ENCODE measurements at regions of chr6 and their contacts with region 1.

Region 1: GRCh38 chr6:53171605-53172446 is 23.2 kb upstream of the GCM1 start:
- DNase-seq: peak; percentile 76
- ATAC-seq: peak; percentile 93
- H3K4me3 ChIP-seq: no peak overlapping the region
- H3K27ac ChIP-seq: no peak overlapping the region
- H3K4me1 ChIP-seq: no peaks in the 10 kb centered on the region
- H3K27me3 ChIP-seq: no peaks in the 10 kb centered on the region
- CTCF ChIP-seq: peak; percentile 100
- EP300 ChIP-seq: no peak
- POLR2A ChIP-seq: no peak
- RAD21 ChIP-seq: peak; percentile 100

Region 2: GRCh38 chr6:53103992-53104675 is 67.7 kb before region 1 on chr6:
- CTCF ChIA-PET with region 1: interaction called, 28 read pairs
- POLR2A ChIA-PET with region 1: no interaction called
- in situ Hi-C with region 1: loop called (anchors 5 kb)
- intact Hi-C with region 1: loop called (anchors 1 kb)
- DNase-seq: peak; percentile 74
- ATAC-seq: peak; percentile 83
- H3K4me3 ChIP-seq: no peak overlapping the region
- H3K27ac ChIP-seq: no peak overlapping the region
- H3K4me1 ChIP-seq: peaks cover 10% of the 10 kb centered on the region; the same call in 1 of the 2 replicates
- H3K27me3 ChIP-seq: no peaks in the 10 kb centered on the region
- CTCF ChIP-seq: peak; percentile 71
- EP300 ChIP-seq: no peak
- POLR2A ChIP-seq: no peak
- RAD21 ChIP-seq: peak; percentile 36; the same call in 1 of the 2 replicates

Region 3: GRCh38 chr6:53128842-53129241 is 43.0 kb before region 1 on chr6:
- CTCF ChIA-PET with region 1: no interaction called
- POLR2A ChIA-PET with region 1: no interaction called
- in situ Hi-C with region 1: no loop called
- intact Hi-C with region 1: no loop called
- DNase-seq: no peak
- ATAC-seq: no peak
- H3K4me3 ChIP-seq: no peak overlapping the region
- H3K27ac ChIP-seq: no peak overlapping the region
- H3K4me1 ChIP-seq: peaks cover 32% of the 10 kb centered on the region
- H3K27me3 ChIP-seq: no peaks in the 10 kb centered on the region
- CTCF ChIP-seq: no peak
- EP300 ChIP-seq: no peak
- POLR2A ChIP-seq: no peak
- RAD21 ChIP-seq: no peak

Region 4: DNA sequence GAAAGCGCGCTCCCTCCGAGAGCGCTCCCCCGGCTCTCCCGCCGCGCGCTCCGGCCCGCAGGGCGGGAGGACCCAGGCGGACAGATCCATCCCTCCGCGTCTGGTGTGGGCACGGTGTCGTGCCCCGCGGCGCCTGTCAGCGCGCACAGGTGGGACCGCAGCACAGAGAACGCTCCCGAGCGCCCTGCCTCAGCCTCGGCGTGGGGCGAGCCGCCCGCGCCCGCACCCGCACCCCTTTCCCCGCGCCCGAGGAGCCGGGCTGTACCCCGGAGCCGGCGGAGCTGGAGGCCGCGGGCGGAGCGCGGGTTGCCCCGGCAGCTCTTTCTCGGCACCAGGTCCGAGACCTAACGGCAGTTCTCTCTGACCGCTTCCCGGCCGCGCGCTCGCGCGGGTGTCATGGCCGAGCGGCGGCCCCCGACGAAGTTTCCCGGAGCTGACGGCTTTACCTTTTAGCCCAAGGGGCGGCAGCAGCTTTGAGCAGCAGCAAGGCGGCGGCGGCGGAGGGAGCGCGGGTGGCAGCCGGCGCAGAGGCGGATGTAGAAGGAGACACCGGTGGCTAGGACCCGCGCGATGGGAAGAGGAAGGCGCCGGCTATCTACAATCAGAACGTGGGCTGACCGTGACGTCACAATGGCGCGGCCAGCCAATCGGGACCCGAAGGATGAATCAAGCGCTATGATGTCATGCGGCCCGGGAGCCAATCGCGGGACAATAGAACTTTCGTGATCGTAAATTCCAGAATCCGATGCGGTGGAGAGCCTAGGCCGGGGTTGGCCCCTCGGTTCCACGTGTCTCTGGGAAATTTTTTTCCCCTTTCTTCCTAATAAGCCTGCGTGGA is 176.8 kb after region 1 on chr6 and contains the start of gene ELOVL5:
- CTCF ChIA-PET with region 1: no interaction called
- POLR2A ChIA-PET with region 1: no interaction called
- in situ Hi-C with region 1: no loop called
- intact Hi-C with region 1: loop called (anchors 5 kb)
- DNase-seq: peak; percentile 81
- ATAC-seq: peak; percentile 84
- H3K4me3 ChIP-seq: peak within 1 kb of the TSS; percentile 69 to 91 (median 91)
- H3K27ac ChIP-seq: peak within 1 kb of the TSS; percentile 66
- H3K4me1 ChIP-seq: peaks cover 23% of the 10 kb centered on the region
- H3K27me3 ChIP-seq: peaks cover 0 to 29% of the 10 kb centered on the region in 2 experiments; a peak in 4 of 5 replicates
- CTCF ChIP-seq: no peak; the same call in 1 of the 2 replicates
- EP300 ChIP-seq: no peak
- POLR2A ChIP-seq: peak; percentile 7 to 60; a peak in 1 of 4 replicates
- RAD21 ChIP-seq: no peak; the same call in none of the 2 replicates
- total RNA-seq, gene ELOVL5: 43.9 and 72.4 TPM in 2 replicates

Region 5: DNA sequence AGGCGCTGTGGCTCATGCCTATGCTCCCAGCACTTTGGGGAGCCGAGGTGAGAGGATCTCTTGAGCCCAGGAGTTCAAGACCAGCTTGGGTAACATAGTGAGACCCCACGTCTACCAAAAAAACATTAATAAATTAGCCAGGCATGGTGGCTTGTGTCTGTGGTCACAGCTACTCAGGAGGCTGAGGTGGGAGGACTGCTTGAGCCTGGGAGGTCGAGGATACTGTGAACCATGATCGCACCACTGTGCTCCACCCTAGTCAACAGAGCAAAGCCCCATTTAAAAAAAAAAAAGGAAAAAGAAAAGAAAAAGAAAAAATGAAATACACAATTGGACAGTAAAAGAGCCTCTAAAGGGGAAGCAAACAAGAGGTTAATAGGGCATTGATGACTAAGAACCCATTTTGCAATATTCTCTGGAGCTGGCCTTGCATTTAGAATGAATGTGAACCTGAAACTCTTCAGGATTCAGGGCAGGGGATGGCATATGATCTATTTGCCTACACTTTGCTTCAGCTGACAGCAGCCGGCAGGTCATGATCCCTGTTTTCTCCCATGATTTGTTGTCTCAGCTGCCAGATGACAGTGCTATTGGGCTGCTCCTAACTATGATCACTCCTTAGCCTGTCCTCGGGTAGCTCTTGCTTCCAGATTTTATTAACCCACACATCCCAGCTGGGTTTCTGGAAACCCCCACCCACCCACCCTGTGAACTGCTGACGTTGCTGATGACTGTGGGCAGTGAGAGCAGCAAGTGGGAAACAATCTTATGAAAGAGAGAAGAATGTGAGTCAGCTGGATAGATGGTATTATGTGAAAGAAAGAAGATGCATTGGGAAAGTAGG is 260.7 kb after region 1 on chr6:
- CTCF ChIA-PET with region 1: interaction called, 152 read pairs
- POLR2A ChIA-PET with region 1: interaction called, 3 read pairs
- in situ Hi-C with region 1: loop called (anchors 5 kb)
- intact Hi-C with region 1: loop called (anchors 1 kb)
- DNase-seq: peak; percentile 93
- ATAC-seq: peak; percentile 93
- H3K4me3 ChIP-seq: no peak overlapping the region
- H3K27ac ChIP-seq: no peak overlapping the region
- H3K4me1 ChIP-seq: peaks cover 42% of the 10 kb centered on the region
- H3K27me3 ChIP-seq: no peaks in the 10 kb centered on the region; a peak in 1 of 5 replicates
- CTCF ChIP-seq: no peak
- EP300 ChIP-seq: peak in 1 of 2 experiments; percentile 72; a peak in 2 of 4 replicates
- POLR2A ChIP-seq: no peak
- RAD21 ChIP-seq: no peak

Region 6: DNA sequence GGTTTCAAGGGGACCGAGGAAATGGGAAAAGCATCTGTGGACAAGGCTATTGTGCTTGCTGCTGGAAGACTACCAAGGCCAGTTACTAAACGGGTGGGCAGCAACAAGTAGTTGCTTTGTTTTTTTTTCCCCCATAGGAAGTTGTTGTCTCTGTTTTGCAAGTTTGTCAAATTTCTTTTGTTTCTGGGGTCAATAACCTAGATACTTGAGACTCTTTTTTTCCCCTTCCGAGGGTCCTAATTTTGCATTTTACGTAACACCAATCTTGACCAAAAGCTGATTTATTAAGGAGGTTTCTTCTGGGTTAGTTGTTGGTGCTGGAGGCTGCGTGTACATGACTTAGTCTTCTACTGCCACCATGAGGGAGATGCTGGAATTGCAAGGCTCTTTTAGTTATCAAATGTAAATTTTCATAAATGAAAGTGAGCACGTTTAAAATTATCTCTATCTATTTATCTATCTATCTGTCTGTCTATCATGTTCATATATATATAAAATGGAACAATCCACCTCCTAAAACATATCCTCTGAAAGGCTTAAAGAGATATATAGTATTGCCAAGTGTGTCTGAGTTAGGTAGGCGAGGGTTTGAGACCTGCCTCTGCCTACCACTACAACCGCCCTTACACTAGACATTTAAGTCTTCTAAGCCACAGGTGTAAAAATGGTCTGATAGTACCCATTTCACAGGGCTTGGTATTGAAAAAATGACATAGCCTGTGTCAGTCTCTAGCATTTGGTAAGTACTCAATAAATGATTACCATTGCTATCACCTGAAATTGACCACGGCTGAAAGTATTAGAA is 312.9 kb after region 1 on chr6:
- CTCF ChIA-PET with region 1: interaction called, 179 read pairs
- POLR2A ChIA-PET with region 1: no interaction called
- in situ Hi-C with region 1: loop called (anchors 5 kb)
- intact Hi-C with region 1: loop called (anchors 1 kb)
- DNase-seq: peak; percentile 67
- ATAC-seq: peak; percentile 76
- H3K4me3 ChIP-seq: no peak overlapping the region
- H3K27ac ChIP-seq: no peak overlapping the region
- H3K4me1 ChIP-seq: peaks cover 17% of the 10 kb centered on the region
- H3K27me3 ChIP-seq: no peaks in the 10 kb centered on the region; a peak in 1 of 5 replicates
- CTCF ChIP-seq: peak; percentile 87
- EP300 ChIP-seq: no peak
- POLR2A ChIP-seq: no peak
- RAD21 ChIP-seq: peak; percentile 86

Region 7: GRCh38 chr6:53725791-53726431 is 554.1 kb after region 1 on chr6:
- CTCF ChIA-PET with region 1: interaction called, 7 read pairs
- POLR2A ChIA-PET with region 1: no interaction called
- in situ Hi-C with region 1: loop called (anchors 25 kb)
- intact Hi-C with region 1: loop called (anchors 5 kb)
- DNase-seq: peak; percentile 72
- ATAC-seq: peak; percentile 94
- H3K4me3 ChIP-seq: no peak overlapping the region
- H3K27ac ChIP-seq: no peak overlapping the region
- H3K4me1 ChIP-seq: peaks cover 17% of the 10 kb centered on the region; the same call in 1 of the 2 replicates
- H3K27me3 ChIP-seq: no peaks in the 10 kb centered on the region
- CTCF ChIP-seq: peak; percentile 95
- EP300 ChIP-seq: no peak
- POLR2A ChIP-seq: no peak
- RAD21 ChIP-seq: peak; percentile 82

Measured in HepG2 (cell line).